ENCODE measurements at regions of chr11 and their contacts with region 1.

Region 1: DNA sequence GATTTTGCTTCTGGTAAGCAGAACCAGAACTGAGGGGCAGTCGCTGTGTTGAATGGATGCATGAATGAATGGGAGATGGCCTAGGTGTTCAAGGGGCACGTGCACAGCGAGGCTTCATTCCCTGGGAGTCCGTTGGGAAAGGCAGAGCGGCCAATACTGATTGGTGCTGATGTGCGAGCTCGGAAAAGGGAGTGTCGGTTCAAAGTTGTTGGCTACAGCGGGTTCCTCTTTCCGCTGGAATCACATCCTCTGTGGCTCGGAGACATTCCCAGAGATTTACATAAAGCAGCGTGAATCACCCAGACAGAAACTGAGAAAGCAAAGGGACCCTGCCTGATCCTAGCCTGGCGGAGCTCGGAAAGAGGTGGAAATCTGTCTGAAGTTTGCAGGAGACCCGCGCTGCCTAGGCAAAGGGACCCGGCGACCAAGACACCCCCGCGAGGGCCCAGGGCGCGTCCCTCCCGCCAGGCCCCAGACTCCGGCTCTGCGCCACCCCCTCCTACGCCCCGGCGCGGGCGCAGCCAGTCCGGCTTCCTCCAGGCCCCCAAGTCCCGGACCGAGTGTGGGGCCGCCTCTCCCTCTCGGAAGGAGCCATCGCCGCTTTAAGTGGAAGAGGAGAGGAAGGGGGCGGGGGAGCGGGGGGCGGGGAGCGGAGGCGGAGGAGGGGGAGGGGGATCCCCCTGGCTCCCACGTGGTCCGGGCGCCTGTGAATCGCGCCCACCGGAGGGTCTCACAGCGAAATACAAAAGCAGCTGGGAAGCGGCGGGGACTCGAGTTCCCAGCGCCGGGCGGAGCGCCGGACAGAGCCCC is at the start of gene FJX1:
- DNase-seq: peak; percentile 82
- CTCF ChIP-seq: no peak

Region 2: GRCh38 chr11:35800970-35801953 is 183.4 kb after region 1 on chr11:
- in situ Hi-C with region 1: loop called (anchors 25 kb)
- DNase-seq: peak; percentile 25
- CTCF ChIP-seq: no peak

Region 3: GRCh38 chr11:36041988-36042611 is 424.2 kb after region 1 on chr11:
- in situ Hi-C with region 1: loop called (anchors 25 kb)
- DNase-seq: peak; percentile 34
- CTCF ChIP-seq: peak; percentile 38

Region 4: DNA sequence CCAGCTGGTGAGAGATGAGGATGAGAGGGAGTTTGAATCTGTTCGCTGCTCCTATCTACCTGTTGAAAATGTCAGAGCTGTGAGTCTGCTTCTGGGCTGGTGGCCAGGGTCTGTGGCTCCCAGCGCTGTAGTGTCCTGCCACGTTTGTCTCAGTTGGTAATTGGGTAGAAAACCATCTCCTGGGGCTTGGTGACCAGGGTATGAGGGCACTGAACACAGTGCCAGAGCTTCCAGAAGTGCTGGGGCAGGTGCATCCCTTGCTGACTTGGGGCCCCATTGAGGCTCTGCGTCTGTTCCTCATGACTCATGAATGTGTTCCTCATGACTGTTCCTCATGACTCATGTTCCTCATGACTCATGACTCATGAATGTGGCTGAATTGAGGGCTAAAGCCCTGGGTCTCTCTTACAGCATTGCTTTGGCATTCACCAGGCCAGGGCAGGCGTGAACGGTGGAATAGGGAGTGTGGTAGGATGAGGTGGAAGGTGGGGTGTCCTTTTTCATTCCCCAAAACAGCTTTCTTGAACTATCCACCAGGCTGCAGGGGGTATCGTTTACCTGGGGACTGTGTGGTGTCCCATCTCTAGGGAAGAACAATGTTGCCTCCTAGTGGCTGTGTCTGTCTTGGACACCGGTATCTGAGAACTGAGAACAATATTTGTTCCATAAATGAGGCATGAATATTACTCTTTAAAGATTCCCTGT is 531.8 kb after region 1 on chr11:
- in situ Hi-C with region 1: loop called (anchors 10 kb)
- DNase-seq: peak; percentile 62
- CTCF ChIP-seq: peak; percentile 37

Region 5: GRCh38 chr11:36265793-36266628 is 648.1 kb after region 1 on chr11:
- in situ Hi-C with region 1: loop called (anchors 10 kb)
- DNase-seq: peak; percentile 72
- CTCF ChIP-seq: peak; percentile 94

Region 6: GRCh38 chr11:36354221-36355003 is 736.5 kb after region 1 on chr11:
- in situ Hi-C with region 1: no loop called
- DNase-seq: peak; percentile 50
- CTCF ChIP-seq: no peak